PC-9 (cell line): ENCODE measurements at regions of chr7 and their contacts with region 1.

Region 1: GRCh38 chr7:121530227-121531174 is 134.4 kb upstream of the FAM3C start:
- DNase-seq: peak; percentile 85 to 99
- H3K4me3 ChIP-seq: peak overlapping the region; percentile 42; the same call in 1 of the 2 replicates
- H3K27ac ChIP-seq: peak overlapping the region; percentile 97
- H3K4me1 ChIP-seq: peaks cover 41% of the 10 kb centered on the region
- H3K27me3 ChIP-seq: no peaks in the 10 kb centered on the region
- CTCF ChIP-seq: no peak; the same call in 1 of the 2 replicates

Region 2: DNA sequence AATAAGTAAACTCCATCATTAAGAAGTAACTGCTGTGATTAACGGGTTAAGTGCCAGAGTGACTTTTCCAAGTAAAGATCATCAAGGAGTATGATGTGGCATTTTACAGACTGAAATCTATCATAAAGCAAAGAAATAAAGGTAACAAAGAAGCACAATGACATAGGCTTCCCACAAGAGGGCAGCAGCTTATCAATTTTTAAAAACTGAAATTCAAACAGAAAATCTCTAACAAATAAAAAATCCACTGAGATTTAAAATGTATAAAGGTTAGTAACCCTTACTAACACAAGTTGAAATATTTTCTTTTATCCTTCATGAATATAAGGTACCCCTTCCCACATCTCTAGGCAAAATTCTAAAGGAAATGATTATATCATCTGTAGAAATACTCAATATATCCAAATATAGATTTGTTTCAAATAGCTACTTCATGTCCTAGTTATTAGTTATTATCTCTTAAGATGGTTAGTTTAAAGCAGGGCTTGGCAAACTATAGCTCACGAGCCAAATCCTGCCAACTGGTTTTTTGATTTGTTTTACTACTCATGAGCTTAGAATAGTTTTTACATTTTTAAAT is 163.6 kb before region 1 on chr7:
- CTCF ChIA-PET with region 1: interaction called, 4 read pairs
- POLR2A ChIA-PET with region 1: no interaction called
- intact Hi-C with region 1: loop called (anchors 1 kb)
- DNase-seq: peak; percentile 15 to 48
- H3K4me3 ChIP-seq: no peak overlapping the region
- H3K27ac ChIP-seq: peak overlapping the region; percentile 38
- H3K4me1 ChIP-seq: peaks cover 16% of the 10 kb centered on the region; the same call in 1 of the 2 replicates
- H3K27me3 ChIP-seq: no peaks in the 10 kb centered on the region
- CTCF ChIP-seq: peak; percentile 94

Region 3: GRCh38 chr7:121515630-121516401 is 14.7 kb before region 1 on chr7:
- CTCF ChIA-PET with region 1: no interaction called
- POLR2A ChIA-PET with region 1: no interaction called
- intact Hi-C with region 1: loop called (anchors 1 kb)
- DNase-seq: no peak
- H3K4me3 ChIP-seq: no peak overlapping the region
- H3K27ac ChIP-seq: peak overlapping the region; percentile 85
- H3K4me1 ChIP-seq: peaks cover 19% of the 10 kb centered on the region
- H3K27me3 ChIP-seq: no peaks in the 10 kb centered on the region
- CTCF ChIP-seq: no peak